RWPE1 (cell line): ENCODE measurements at regions of chr7 and their contacts with region 1.

Region 1: GRCh38 chr7:100148559-100149350 is at the start of gene LAMTOR4:
- DNase-seq: peak; percentile 99
- H3K27ac ChIP-seq: peak within 1 kb of the TSS; percentile 78
- CTCF ChIP-seq: no peak

Region 2: DNA sequence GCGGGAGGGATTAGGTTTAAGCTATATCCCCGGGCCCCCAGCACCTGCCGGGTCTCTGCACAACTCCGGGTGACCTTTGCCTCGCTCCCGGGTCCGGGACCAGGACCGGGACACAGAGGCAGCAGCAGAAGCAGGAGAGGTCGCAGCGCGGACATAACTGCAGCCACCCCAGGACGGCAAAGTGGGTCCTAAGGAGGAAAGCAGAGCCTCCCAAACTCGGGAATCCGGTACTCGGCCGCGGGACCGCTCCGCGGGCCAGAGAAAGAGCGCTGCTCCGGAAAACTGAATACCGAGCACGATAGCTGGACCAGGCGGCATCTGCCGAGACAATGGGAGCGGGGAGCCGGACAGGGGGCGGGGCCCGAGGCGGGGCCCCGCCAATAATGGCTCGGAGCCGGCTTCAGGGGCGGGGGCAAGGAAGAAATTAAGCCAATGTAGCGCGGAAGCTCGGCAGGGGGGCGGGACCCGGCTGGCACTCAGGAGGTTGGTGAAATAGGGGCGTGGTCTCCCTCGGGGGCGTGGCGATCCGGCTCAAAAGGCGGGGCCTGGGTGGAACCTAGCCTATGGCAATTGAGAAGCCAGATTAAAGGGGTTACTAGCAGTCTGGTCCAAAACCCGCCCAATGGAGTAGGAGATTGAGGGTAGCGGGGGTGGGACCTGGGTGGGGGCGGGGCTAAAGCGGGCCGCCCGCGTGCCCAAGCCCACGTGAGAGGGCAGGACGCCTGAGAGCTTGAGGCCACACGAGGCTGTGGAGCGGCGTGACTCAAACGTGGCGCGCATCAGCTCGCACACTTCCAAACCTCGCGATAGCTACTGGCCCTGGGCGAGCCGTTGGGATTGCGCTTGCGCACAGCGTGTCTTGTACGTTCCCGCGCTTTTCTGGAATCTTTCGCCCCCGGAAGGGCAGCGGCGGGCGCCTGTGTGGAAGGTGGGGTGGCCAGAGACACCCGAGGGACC is 28.6 kb after region 1 on chr7 and contains the starts of genes GPC2 and STAG3:
- CTCF ChIA-PET with region 1: no interaction called
- POLR2A ChIA-PET with region 1: interaction called, 10 read pairs
- DNase-seq: peak; percentile 95
- H3K27ac ChIP-seq: peak within 1 kb of the TSS; percentile 44
- CTCF ChIP-seq: no peak